Dorsolateral prefrontal cortex (tissue), 120 donors: ENCODE measurements at regions of chr18 and their contacts with region 1.

Region 1: GRCh38 chr18:59358712-59359575 is at the start of gene LMAN1:
- DNase-seq: peak; percentile 92 to 98 (median 94)
- H3K4me3 ChIP-seq: peak within 1 kb of the TSS; percentile 61 to 99 (median 91)
- H3K27ac ChIP-seq: peak within 1 kb of the TSS in 57 of 59 donors; percentile 46 to 93 (median 84)
- H3K27me3 ChIP-seq: no peaks in the 10 kb centered on the region
- CTCF ChIP-seq: peak in 7 of 56 donors; percentile 4 to 37 (median 15)
- total RNA-seq, gene LMAN1: 22.1 to 57.5 (median 32.6) TPM

Region 2: GRCh38 chr18:59311631-59312030 is 47.3 kb before region 1 on chr18:
- intact Hi-C with region 1: no loop called
- DNase-seq: no peak
- H3K4me3 ChIP-seq: no peak overlapping the region
- H3K27ac ChIP-seq: no peak overlapping the region
- H3K27me3 ChIP-seq: peaks cover 0 to 46% (median 15%) of the 10 kb centered on the region in 45 donors
- CTCF ChIP-seq: no peak

Region 3: DNA sequence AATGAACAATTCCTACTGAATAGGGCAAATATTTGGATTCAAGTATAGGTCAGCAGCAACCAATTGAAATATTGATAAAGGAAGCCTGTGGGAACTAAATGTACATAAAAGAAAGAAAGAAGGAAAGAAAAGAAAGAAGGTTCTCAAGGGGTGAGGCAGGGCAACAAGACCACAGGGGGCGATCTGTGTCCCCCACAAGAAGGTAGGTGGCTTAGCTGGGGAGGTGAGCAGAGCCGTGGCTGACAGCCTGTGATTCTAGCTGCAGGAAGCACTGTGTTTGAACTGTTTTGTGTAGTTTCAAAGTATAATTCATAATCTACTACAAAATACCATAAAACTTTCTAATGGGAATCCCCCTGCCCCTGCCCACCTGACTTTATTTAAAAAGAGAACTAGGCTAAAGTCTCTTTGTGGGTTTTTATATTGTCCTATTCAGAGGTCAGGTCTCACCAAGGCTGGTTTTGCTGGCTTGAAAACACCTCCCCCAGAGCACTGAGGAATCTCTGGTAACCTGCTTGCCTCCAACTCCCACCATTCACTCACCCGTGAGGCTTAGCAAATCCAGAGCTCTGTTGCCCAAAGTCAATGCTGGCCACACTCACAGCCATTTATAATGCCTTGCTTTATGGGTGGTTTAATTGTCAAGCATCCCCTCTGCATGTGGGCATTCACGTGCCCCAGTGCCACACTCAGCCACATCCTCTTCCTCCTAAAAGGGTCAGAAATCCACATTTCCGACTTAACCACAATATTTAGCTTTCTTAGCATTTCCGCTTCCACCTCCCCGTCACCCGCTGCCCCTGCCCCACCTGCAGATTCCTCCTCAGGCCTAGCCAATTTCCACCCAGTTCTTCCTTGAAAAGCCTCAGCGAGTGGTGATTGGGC is 36.5 kb after region 1 on chr18:
- intact Hi-C with region 1: loop called in 1 of 2 experiments (anchors 5 kb)
- DNase-seq: no peak
- H3K4me3 ChIP-seq: no peak overlapping the region
- H3K27ac ChIP-seq: no peak overlapping the region
- H3K27me3 ChIP-seq: peaks cover 0 to 34% (median 8%) of the 10 kb centered on the region in 45 donors
- CTCF ChIP-seq: no peak